ENCODE measurements at regions of chr3 and their contacts with region 1.

Region 1: GRCh38 chr3:55252921-55253320 is 234.2 kb downstream of the WNT5A start:
- DNase-seq: no peak
- H3K4me3 ChIP-seq: no peak overlapping the region
- H3K27ac ChIP-seq: no peak overlapping the region
- H3K4me1 ChIP-seq: no peaks in the 10 kb centered on the region
- H3K27me3 ChIP-seq: no peaks in the 10 kb centered on the region
- CTCF ChIP-seq: no peak
- EP300 ChIP-seq: no peak
- POLR2A ChIP-seq: no peak

Region 2: GRCh38 chr3:54549607-54550220 is 703.2 kb before region 1 on chr3:
- intact Hi-C with region 1: loop called in 1 of 4 experiments (anchors 10 kb)
- DNase-seq: no peak
- H3K4me3 ChIP-seq: no peak overlapping the region
- H3K27ac ChIP-seq: no peak overlapping the region
- H3K4me1 ChIP-seq: no peaks in the 10 kb centered on the region
- H3K27me3 ChIP-seq: no peaks in the 10 kb centered on the region
- CTCF ChIP-seq: no peak
- EP300 ChIP-seq: no peak
- POLR2A ChIP-seq: no peak

Region 3: GRCh38 chr3:55721716-55722484 is 469.0 kb after region 1 on chr3:
- intact Hi-C with region 1: no loop called
- DNase-seq: peak in 3 of 5 donors; percentile 21 to 38 (median 28)
- H3K4me3 ChIP-seq: no peak overlapping the region
- H3K27ac ChIP-seq: no peak overlapping the region
- H3K4me1 ChIP-seq: peaks cover 6% of the 10 kb centered on the region
- H3K27me3 ChIP-seq: no peaks in the 10 kb centered on the region
- CTCF ChIP-seq: peak in 1 of 3 donors; percentile 22
- EP300 ChIP-seq: no peak
- POLR2A ChIP-seq: no peak